Pancreas (tissue), 10 donors: ENCODE measurements at regions of chr12 and their contacts with region 1.

Region 1: DNA sequence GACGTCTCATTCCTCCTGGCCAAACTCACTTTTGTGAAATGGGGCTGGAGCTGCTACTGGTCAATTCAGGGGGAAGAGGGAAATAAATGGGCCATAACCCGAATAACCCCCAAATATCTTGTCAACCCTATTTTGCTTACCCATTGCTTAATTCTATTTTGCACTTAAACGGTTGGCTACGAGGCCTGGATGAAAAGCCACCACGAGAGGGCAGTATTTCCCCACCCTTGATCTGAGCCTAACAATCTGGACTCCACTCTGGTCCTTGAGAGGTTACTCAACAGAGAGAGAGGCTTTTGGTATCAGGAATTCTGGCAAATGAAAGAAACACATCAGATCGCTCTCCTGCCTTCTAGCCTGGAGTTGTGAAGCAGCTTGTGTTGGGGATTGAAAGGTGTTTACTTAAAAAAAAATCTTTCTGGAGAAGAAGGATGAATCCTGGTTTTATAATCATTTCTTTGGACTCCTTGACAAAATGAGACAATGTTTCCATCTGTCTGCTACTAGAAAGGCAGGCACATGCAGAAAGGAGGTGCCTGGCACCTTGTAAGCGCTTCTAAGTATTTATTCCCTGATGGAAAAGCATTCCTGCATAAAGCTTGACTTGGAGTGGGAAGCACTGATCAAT is 22.4 kb upstream of the FBXO21 start:
- DNase-seq: peak in 5 of 6 donors; percentile 45 to 80 (median 66)
- ATAC-seq: peak; percentile 74 to 95 (median 93)
- H3K4me3 ChIP-seq: no peak overlapping the region
- H3K27ac ChIP-seq: no peak overlapping the region
- H3K4me1 ChIP-seq: no peaks in the 10 kb centered on the region
- H3K27me3 ChIP-seq: no peaks in the 10 kb centered on the region
- CTCF ChIP-seq: peak; percentile 80 to 88 (median 83)

Region 2: DNA sequence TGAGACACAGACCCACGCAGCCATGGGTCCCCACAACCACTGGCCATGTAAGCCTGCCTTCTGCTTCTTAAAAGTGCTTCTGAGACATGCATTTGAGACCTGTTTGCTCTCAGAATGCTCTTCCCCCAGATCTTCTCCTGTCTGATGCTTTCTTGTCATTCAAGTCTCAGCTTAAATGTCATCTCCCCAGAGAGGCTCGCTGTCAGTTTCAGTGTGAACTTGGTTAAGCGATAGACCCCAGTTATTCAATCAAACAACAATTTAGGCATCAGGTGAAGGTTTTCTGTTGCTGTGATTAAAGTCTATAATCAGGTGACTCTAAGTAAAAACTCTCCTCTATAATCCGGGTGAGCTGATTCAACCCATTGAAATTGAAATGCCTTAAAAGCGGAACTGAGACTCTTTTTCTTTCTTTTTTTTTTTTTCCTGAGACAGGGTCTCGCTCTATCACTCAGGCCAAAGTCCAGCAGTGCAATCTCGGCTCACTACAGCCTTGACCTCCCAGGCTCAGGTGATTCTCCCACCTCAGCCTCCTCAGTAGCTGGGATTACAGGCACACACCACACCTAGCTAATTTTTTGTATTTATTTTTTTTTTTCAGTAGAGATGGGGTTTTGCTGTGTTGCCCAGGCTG is 632.7 kb after region 1 on chr12:
- intact Hi-C with region 1: loop called (anchors 10 kb)
- DNase-seq: no peak
- ATAC-seq: no peak
- H3K4me3 ChIP-seq: no peak overlapping the region
- H3K27ac ChIP-seq: no peak overlapping the region
- H3K4me1 ChIP-seq: no peaks in the 10 kb centered on the region
- H3K27me3 ChIP-seq: no peaks in the 10 kb centered on the region
- CTCF ChIP-seq: no peak